ENCODE measurements at regions of chr19 and their contacts with region 1.

Region 1: DNA sequence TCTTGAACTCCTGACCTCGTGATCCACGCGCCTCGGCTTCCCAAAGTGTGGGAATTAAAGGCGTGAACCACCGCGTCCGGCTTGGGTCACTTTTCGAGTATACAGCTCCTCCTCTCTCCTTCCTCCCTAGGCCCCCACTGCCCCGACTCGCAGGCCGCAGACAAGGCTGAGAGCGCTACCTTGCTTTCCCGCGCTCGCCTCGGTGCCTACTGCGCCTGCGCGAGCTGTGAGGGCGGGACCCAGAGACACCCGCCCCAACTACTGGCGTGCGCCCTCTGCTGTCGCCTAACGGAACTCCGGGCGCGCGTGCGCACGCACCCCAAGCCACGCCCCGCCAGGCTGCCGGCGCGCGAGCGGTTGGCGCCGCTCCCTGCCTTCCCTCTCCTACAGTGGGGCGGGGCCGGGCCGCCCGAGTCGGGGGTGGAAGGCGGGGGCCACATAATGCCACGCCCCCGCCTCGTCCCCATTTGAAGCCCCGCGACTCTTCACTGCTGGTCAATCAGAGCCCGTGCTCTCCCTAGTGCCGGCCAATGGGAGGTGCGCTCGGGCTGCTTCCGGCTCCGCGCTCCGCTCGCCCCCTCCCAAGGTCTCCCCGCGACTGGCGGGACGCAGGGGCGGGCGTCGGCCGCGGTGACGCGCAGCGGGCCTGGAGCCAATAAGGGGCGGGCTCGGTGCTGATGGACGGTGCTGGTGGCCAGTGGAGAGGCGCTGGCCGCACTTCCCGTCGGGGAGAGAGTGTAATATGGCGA is at the start of gene RAB8A:
- DNase-seq: peak; percentile 99
- ATAC-seq: peak; percentile 98
- H3K4me3 ChIP-seq: peak within 1 kb of the TSS; percentile 96
- H3K27ac ChIP-seq: peak within 1 kb of the TSS; percentile 48
- H3K4me1 ChIP-seq: peaks cover 15% of the 10 kb centered on the region
- H3K27me3 ChIP-seq: no peaks in the 10 kb centered on the region
- CTCF ChIP-seq: peak; percentile 76
- total RNA-seq, gene RAB8A: 65.7 and 94.5 TPM in 2 replicates

Region 2: DNA sequence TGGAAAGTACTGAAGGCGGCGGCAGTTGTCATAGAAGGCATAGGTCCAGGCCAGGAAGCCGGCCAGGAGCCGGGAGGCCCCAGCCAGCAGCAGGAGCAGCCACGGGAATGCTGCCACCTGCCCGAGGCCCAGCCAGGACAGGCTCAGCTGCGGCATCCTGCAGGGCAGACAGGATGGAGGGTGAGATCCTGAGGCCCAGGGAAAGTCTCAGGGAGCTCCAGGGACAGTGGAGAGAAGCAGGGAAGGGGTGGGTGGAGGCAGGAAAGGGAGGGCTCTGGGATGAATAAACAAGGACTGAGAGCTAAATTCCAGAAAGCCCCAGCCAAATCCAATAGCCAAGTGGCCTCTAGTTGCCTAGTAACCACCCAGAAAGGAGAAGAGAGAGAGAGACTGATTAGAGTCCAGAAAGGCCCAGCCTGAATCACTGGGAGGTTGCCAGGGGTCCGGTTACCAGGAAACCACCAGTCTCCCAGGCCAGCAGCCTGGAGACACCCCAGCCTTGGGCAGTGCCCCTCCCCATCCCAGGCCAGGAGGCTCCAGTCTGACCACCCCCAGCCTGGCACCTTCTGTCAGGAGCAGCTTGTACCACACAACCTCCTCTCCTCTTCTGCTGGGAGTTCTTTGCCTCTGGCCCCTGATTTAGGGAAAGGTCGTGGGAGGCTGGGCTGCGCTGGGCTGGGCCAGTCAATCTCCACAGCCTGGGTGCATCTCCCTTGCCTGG is 331.4 kb before region 1 on chr19:
- CTCF ChIA-PET with region 1: no interaction called
- POLR2A ChIA-PET with region 1: no interaction called
- intact Hi-C with region 1: no loop called
- DNase-seq: peak; percentile 9
- ATAC-seq: 0 out of 2 replicates have a peak, but pooled peaks have one; percentile 13
- H3K4me3 ChIP-seq: no peak overlapping the region
- H3K27ac ChIP-seq: no peak overlapping the region
- H3K4me1 ChIP-seq: peaks cover 3% of the 10 kb centered on the region; the same call in 1 of the 2 replicates
- H3K27me3 ChIP-seq: no peaks in the 10 kb centered on the region
- CTCF ChIP-seq: no peak

Region 3: GRCh38 chr19:16062789-16063188 is 48.5 kb before region 1 on chr19:
- CTCF ChIA-PET with region 1: no interaction called
- POLR2A ChIA-PET with region 1: no interaction called
- intact Hi-C with region 1: loop called (anchors 1 kb)
- DNase-seq: peak; percentile 73
- ATAC-seq: no peak
- H3K4me3 ChIP-seq: no peak overlapping the region
- H3K27ac ChIP-seq: no peak overlapping the region
- H3K4me1 ChIP-seq: peaks cover 6% of the 10 kb centered on the region
- H3K27me3 ChIP-seq: no peaks in the 10 kb centered on the region
- CTCF ChIP-seq: peak; percentile 89

Region 4: DNA sequence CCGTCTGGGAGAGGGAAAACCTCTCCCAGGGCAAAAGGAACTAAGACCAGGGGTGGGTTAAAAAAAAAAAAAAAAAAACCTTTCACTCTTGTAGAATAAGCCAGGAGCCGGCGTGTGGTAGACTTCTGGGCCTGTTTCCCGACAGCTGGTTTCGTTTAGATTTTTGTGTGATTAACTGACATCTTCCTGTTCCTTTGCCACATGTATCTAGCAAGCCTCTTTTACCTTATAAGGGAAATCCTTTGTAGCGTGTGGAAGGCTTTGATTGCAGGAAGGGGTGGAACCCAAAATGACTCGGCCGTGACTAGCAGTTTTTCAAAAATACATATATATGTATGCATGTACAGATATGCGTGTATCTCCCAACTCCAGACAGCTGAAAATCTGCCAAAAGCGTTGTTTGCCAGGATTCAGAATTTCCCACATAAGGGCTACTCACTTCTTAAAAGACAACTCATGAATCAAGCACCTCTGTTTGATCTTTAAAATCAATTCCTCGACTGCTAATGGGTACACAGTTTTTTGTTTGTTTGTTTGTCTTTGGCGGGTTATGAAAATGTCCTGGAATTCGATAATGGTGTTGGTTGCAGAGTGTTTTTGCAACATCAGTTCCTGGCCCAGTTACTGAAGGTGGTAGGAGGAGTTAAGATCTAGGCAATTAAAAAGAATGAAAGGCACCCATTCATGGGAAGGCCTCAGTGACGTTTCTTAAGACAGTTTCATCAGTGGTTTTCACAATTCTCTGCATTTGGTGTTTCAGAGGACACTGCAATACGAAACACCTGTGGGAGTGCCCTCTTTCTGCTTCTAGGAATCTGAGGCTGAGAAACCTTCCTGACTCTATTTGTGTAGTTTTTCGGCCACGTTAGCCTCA is 32.3 kb before region 1 on chr19:
- CTCF ChIA-PET with region 1: interaction called, 5 read pairs
- POLR2A ChIA-PET with region 1: interaction called, 8 read pairs
- intact Hi-C with region 1: loop called (anchors 1 kb)
- DNase-seq: peak; percentile 99
- ATAC-seq: peak; percentile 90
- H3K4me3 ChIP-seq: peak overlapping the region; percentile 3; the same call in 1 of the 2 replicates
- H3K27ac ChIP-seq: peak overlapping the region; percentile 98
- H3K4me1 ChIP-seq: peaks cover 32% of the 10 kb centered on the region
- H3K27me3 ChIP-seq: no peaks in the 10 kb centered on the region
- CTCF ChIP-seq: no peak

Region 5: GRCh38 chr19:16098845-16099244 is 12.5 kb before region 1 on chr19:
- CTCF ChIA-PET with region 1: no interaction called
- POLR2A ChIA-PET with region 1: no interaction called
- intact Hi-C with region 1: no loop called
- DNase-seq: no peak
- ATAC-seq: no peak
- H3K4me3 ChIP-seq: no peak overlapping the region
- H3K27ac ChIP-seq: no peak overlapping the region
- H3K4me1 ChIP-seq: peaks cover 16% of the 10 kb centered on the region
- H3K27me3 ChIP-seq: no peaks in the 10 kb centered on the region
- CTCF ChIP-seq: no peak

Region 6: DNA sequence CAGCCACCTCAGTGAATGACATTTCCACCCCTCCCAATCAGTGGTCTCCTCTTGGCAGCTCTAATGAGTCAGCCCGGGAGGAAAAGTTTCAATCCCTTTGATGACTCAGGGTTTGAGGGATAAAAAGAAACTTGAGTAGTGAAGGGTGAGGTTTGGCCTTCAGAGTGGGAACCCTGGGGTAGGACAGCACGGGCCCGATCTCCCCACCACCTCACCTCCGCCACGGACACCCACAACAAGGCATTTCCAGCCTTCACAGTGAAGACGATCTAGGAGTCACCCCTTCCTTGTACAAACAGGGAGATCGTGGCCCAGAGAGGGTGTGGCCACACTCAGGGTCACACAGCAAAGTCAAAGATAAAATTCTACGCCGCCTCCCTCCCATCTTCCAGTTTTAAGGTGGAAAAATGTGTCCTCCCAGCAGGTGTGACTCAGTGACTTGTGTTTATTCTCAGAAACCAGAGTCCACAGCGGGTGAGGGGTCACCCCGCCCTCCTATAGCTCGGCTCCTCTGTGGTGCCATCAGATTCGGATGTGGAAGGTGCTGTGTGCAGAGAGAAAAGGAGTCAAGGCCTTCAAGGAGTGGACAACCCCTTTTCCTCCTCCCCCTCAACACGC is 49.7 kb after region 1 on chr19:
- CTCF ChIA-PET with region 1: interaction called, 11 read pairs
- POLR2A ChIA-PET with region 1: interaction called, 13 read pairs
- intact Hi-C with region 1: loop called (anchors 1 kb)
- DNase-seq: peak; percentile 98
- ATAC-seq: peak; percentile 80
- H3K4me3 ChIP-seq: peak overlapping the region; percentile 56
- H3K27ac ChIP-seq: peak overlapping the region; percentile 99
- H3K4me1 ChIP-seq: peaks cover 27% of the 10 kb centered on the region
- H3K27me3 ChIP-seq: no peaks in the 10 kb centered on the region
- CTCF ChIP-seq: no peak